Activated CD4-positive, alpha-beta T cell treated with anti-CD3 and anti-CD28 coated beads for 36 hours (primary cell): ENCODE measurements at regions of chr19 and their contacts with region 1.

Region 1: GRCh38 chr19:19865739-19866481 is at the start of gene ZNF253:
- DNase-seq: peak; percentile 98
- ATAC-seq: peak; percentile 93
- H3K4me3 Mint-ChIP-seq: peak within 1 kb of the TSS; percentile 88
- H3K27ac Mint-ChIP-seq: peak within 1 kb of the TSS; percentile 98
- H3K4me1 Mint-ChIP-seq: peaks cover 21% of the 10 kb centered on the region
- H3K27me3 Mint-ChIP-seq: no peaks in the 10 kb centered on the region
- total RNA-seq, gene ZNF253: 16.1 to 25.1 TPM

Region 2: DNA sequence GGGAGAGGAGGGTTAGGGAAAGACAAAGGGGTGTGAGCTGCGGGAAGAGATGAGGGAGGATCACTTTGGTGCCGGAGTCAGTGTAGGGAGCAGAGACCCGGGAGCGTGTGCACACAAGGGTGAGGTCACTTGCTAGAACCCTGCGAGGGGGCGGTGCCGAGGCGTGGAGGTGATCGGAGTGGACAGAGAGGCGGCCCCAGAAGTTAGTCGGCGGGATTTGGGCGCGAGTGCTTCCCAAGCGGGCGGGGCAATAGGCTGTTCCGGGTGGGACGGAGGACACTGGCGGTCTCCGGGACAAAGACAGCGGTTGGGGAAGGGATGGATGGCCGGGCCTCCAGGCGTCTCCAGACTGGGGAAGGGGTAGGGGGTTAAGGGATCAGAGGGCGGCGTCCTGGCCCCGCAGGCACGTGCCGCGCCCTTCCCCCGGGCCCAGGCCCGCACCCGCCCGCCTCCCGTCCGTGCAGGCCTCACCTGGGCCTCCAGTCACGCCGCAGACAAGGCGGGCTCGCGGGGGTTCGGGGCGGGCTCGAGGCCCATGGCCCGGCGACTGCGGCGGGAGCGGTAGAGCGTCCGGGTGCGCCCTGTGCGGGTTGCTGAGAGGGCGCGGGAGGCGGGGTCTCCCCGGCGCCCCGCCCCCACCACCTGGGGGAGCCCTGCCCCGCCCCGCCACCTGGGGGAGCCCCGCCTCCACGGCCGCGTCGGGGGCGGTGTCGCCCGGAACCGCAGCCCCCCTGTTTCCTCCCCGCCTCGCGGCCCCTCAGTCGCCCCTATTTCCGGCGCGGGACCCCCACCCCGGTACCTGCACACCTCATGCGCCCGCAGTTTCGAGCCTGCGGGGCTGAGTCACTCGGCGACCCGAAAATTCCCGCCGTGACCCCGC is 238.0 kb before region 1 on chr19 and contains the start of gene LPAR2:
- CTCF ChIA-PET with region 1: no interaction called
- POLR2A ChIA-PET with region 1: no interaction called
- intact Hi-C with region 1: no loop called
- DNase-seq: peak; percentile 81
- ATAC-seq: peak; percentile 74
- H3K4me3 Mint-ChIP-seq: peak within 1 kb of the TSS; percentile 80
- H3K27ac Mint-ChIP-seq: peak within 1 kb of the TSS; percentile 79
- H3K4me1 Mint-ChIP-seq: peaks cover 23% of the 10 kb centered on the region
- H3K27me3 Mint-ChIP-seq: no peaks in the 10 kb centered on the region
- total RNA-seq, gene LPAR2: 21.6 to 33.2 TPM

Region 3: GRCh38 chr19:19776041-19777008 is 89.6 kb before region 1 on chr19:
- CTCF ChIA-PET with region 1: no interaction called
- POLR2A ChIA-PET with region 1: interaction called, 5 read pairs
- intact Hi-C with region 1: loop called (anchors 1 to 5 kb)
- DNase-seq: peak; percentile 96
- ATAC-seq: peak; percentile 99
- H3K4me3 Mint-ChIP-seq: peak overlapping the region; percentile 98
- H3K27ac Mint-ChIP-seq: peak overlapping the region; percentile 85
- H3K4me1 Mint-ChIP-seq: peaks cover 37% of the 10 kb centered on the region
- H3K27me3 Mint-ChIP-seq: no peaks in the 10 kb centered on the region